Naive thymus-derived CD4-positive, alpha-beta T cell (primary cell): ENCODE measurements at regions of chr19 and their contacts with region 1.

Region 1: DNA sequence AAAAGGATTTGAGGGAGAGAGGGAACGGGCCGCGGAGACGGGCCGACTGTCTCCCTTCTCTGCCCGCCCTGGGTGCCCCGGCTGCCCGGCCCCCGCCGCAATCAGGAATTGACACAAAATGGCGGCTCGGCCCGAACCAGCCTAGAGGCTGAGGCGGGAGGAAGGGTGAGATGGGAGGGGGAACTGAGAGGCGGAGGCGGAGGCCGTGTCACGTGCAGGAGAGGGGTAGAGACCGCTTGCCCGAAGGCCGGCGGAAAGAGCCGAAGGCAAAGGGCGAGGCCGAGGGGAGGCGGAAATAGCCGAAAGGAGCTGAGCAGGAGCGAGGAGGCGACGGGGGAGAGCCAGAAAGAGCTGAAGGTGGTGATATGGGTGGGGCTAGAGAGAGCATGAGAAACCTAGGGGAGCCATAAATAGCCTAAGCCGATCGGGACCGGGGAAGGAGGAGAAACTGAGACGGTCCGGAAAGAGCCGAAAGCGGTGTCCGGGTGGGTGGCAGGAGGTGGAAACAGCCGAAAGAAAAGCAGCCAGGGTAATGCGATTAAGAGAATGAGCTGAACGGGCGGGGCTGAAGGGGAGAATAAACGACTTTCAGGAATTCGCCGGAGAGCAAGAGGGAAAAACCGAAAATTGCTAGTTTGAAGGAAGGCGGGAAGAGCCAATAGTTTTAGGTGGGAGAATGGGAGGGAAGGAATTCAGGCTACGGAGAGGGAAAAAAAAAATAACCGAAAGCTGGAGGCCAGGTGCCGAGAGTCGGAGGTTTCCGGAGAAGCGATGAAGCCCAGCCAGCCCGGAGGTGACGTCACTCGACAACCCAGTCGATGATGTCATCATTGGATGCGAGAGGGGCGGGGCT is at the start of gene ZC3H4:
- DNase-seq: peak; percentile 96 to 100 (median 100)
- ATAC-seq: peak; percentile 90
- H3K4me3 ChIP-seq: peak within 1 kb of the TSS; percentile 84
- H3K4me3 Mint-ChIP-seq: peak within 1 kb of the TSS; percentile 93 to 100 (median 98)
- H3K27ac ChIP-seq: peak within 1 kb of the TSS; percentile 99
- H3K27ac Mint-ChIP-seq: peak within 1 kb of the TSS; percentile 99 to 100 (median 100)
- H3K4me1 ChIP-seq: peaks cover 17 to 25% of the 10 kb centered on the region in 2 donors
- H3K4me1 Mint-ChIP-seq: peaks cover 22 to 38% (median 35%) of the 10 kb centered on the region in 7 donors
- H3K27me3 ChIP-seq: no peaks in the 10 kb centered on the region
- H3K27me3 Mint-ChIP-seq: peaks cover 0 to 2% (median 0%) of the 10 kb centered on the region in 5 donors
- total RNA-seq, gene ZC3H4: 53.6 to 123 (median 73.0) TPM

Region 2: DNA sequence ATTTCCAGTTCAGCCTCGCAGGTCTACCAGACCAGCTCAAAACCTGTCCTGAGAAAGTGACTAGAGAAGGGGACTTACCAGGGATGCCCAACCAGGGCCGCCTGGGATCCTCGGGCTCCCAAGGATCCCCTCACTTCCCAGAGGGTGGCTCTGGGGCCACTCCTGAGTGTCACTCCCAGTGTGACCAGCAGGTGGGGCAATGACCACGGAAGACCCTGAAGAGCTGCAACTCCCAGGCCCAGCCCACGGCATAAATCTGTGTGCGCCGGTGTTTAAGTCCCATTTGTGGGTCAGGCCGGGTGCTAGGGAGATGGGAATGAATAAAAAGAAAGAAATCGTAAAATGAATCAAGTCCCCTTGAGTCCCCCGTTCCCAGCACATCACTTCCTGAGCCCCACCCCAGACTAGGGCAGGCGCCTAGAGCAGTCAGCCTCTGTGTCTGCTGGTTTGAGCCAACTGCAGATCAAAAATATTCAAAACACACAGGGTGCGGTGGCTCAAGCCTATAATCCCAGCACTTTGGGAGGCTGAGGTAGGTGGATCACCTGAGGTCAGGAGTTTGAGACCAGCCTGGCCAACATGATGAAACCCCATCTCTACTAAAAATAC is 499.0 kb before region 1 on chr19:
- CTCF ChIA-PET with region 1: no interaction called
- POLR2A ChIA-PET with region 1: no interaction called
- intact Hi-C with region 1: loop called in 1 of 2 experiments (anchors 5 kb)
- DNase-seq: peak in 8 of 9 donors; percentile 70 to 83 (median 77)
- ATAC-seq: peak; percentile 79
- H3K4me3 ChIP-seq: no peak overlapping the region
- H3K4me3 Mint-ChIP-seq: peak overlapping the region; percentile 40 to 77 (median 71)
- H3K27ac ChIP-seq: peak overlapping the region; percentile 65
- H3K27ac Mint-ChIP-seq: peak overlapping the region; percentile 79 to 93 (median 89)
- H3K4me1 ChIP-seq: peaks cover 24 to 84% of the 10 kb centered on the region in 2 donors
- H3K4me1 Mint-ChIP-seq: peaks cover 55 to 85% (median 77%) of the 10 kb centered on the region in 7 donors
- H3K27me3 ChIP-seq: no peaks in the 10 kb centered on the region
- H3K27me3 Mint-ChIP-seq: no peaks in the 10 kb centered on the region

Region 3: GRCh38 chr19:46860125-46860845 is 252.9 kb before region 1 on chr19:
- CTCF ChIA-PET with region 1: no interaction called
- POLR2A ChIA-PET with region 1: interaction called, 4 read pairs
- intact Hi-C with region 1: loop called (anchors 1 to 2 kb)
- DNase-seq: peak; percentile 84 to 95 (median 94)
- ATAC-seq: peak; percentile 91
- H3K4me3 ChIP-seq: peak overlapping the region; percentile 92
- H3K4me3 Mint-ChIP-seq: peak overlapping the region in 9 of 10 donors; percentile 70 to 97 (median 92)
- H3K27ac ChIP-seq: peak overlapping the region; percentile 94
- H3K27ac Mint-ChIP-seq: peak overlapping the region; percentile 68 to 98 (median 92)
- H3K4me1 ChIP-seq: peaks cover 24 to 30% of the 10 kb centered on the region in 2 donors
- H3K4me1 Mint-ChIP-seq: peaks cover 13 to 25% (median 19%) of the 10 kb centered on the region in 7 donors
- H3K27me3 ChIP-seq: no peaks in the 10 kb centered on the region
- H3K27me3 Mint-ChIP-seq: no peaks in the 10 kb centered on the region

Region 4: GRCh38 chr19:46924874-46925547 is 188.2 kb before region 1 on chr19:
- CTCF ChIA-PET with region 1: no interaction called
- POLR2A ChIA-PET with region 1: no interaction called
- intact Hi-C with region 1: no loop called
- DNase-seq: peak in 1 of 9 donors; percentile 1
- ATAC-seq: peak; percentile 61
- H3K4me3 ChIP-seq: no peak overlapping the region
- H3K4me3 Mint-ChIP-seq: no peak overlapping the region
- H3K27ac ChIP-seq: no peak overlapping the region
- H3K27ac Mint-ChIP-seq: peak overlapping the region in 4 of 9 donors; percentile 1 to 82 (median 14)
- H3K4me1 ChIP-seq: peaks cover 12 to 43% of the 10 kb centered on the region in 2 donors
- H3K4me1 Mint-ChIP-seq: peaks cover 23 to 51% (median 46%) of the 10 kb centered on the region in 7 donors
- H3K27me3 ChIP-seq: no peaks in the 10 kb centered on the region
- H3K27me3 Mint-ChIP-seq: no peaks in the 10 kb centered on the region

Region 5: GRCh38 chr19:47081111-47081510 is 32.1 kb before region 1 on chr19:
- CTCF ChIA-PET with region 1: interaction called, 32 read pairs
- POLR2A ChIA-PET with region 1: interaction called, 51 read pairs
- intact Hi-C with region 1: loop called (anchors 1 kb)
- DNase-seq: no peak
- ATAC-seq: no peak
- H3K4me3 ChIP-seq: no peak overlapping the region
- H3K4me3 Mint-ChIP-seq: no peak overlapping the region
- H3K27ac ChIP-seq: no peak overlapping the region
- H3K27ac Mint-ChIP-seq: peak overlapping the region in 3 of 9 donors; percentile 8 to 67 (median 47)
- H3K4me1 ChIP-seq: no peaks in the 10 kb centered on the region
- H3K4me1 Mint-ChIP-seq: peaks cover 0 to 18% (median 0%) of the 10 kb centered on the region in 7 donors
- H3K27me3 ChIP-seq: no peaks in the 10 kb centered on the region
- H3K27me3 Mint-ChIP-seq: no peaks in the 10 kb centered on the region

Region 6: DNA sequence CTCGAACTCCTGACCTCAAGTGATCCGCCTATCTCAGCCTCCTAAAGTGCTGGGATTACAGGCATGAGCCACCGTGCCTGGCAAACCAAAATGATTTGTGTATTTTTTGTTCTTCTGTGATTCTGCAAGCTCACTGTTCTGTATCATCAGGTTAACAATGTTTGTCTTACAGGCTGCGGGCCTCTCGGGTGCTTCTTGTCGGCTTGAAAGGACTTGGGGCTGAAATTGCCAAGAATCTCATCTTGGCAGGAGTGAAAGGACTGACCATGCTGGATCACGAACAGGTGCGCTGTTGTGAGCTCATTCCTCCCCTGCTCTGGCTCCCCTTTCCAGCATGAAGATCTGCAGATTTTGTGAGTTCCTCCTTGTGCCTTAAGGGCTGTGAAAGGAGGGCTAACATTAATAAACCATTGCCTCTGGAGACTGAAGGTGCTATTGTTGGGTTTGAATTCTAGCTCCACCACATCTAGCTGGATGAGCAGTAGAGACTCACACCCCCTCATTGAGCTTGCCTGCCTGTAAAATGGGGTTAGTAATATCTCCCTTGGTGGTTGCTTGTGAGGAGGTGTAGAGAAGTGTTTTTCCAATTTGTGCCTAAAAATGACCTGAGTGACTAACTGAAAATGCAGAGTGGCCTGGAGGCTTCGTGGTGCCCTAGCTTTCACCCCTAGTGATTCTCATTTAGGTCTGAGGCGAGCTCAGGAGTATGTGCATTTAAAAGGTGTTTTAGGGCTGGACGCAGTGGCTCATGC is 30.3 kb after region 1 on chr19:
- CTCF ChIA-PET with region 1: interaction called, 3 read pairs
- POLR2A ChIA-PET with region 1: interaction called, 16 read pairs
- intact Hi-C with region 1: no loop called
- DNase-seq: no peak
- ATAC-seq: no peak
- H3K4me3 ChIP-seq: no peak overlapping the region
- H3K4me3 Mint-ChIP-seq: peak overlapping the region in 3 of 10 donors; percentile 9 to 45 (median 32)
- H3K27ac ChIP-seq: no peak overlapping the region
- H3K27ac Mint-ChIP-seq: peak overlapping the region in 4 of 9 donors; percentile 11 to 73 (median 42)
- H3K4me1 ChIP-seq: peaks cover 21 to 38% of the 10 kb centered on the region in 2 donors
- H3K4me1 Mint-ChIP-seq: peaks cover 29 to 75% (median 57%) of the 10 kb centered on the region in 7 donors
- H3K27me3 ChIP-seq: no peaks in the 10 kb centered on the region
- H3K27me3 Mint-ChIP-seq: no peaks in the 10 kb centered on the region

Region 7: GRCh38 chr19:47243776-47244547 is 130.7 kb after region 1 on chr19:
- CTCF ChIA-PET with region 1: interaction called, 8 read pairs
- POLR2A ChIA-PET with region 1: interaction called, 5 read pairs
- intact Hi-C with region 1: loop called in 1 of 2 experiments (anchors 1 kb)
- DNase-seq: peak; percentile 80 to 94 (median 86)
- ATAC-seq: peak; percentile 69
- H3K4me3 ChIP-seq: peak overlapping the region; percentile 42
- H3K4me3 Mint-ChIP-seq: peak overlapping the region in 7 of 10 donors; percentile 68 to 86 (median 85)
- H3K27ac ChIP-seq: peak overlapping the region; percentile 28
- H3K27ac Mint-ChIP-seq: peak overlapping the region in 6 of 9 donors; percentile 61 to 95 (median 90)
- H3K4me1 ChIP-seq: peaks cover 35 to 37% of the 10 kb centered on the region in 2 donors
- H3K4me1 Mint-ChIP-seq: peaks cover 9 to 33% (median 25%) of the 10 kb centered on the region in 7 donors
- H3K27me3 ChIP-seq: no peaks in the 10 kb centered on the region
- H3K27me3 Mint-ChIP-seq: peaks cover 0 to 6% (median 0%) of the 10 kb centered on the region in 5 donors

Region 8: GRCh38 chr19:47514869-47515588 is 401.8 kb after region 1 on chr19 and contains the start of gene NAPA:
- CTCF ChIA-PET with region 1: no interaction called
- POLR2A ChIA-PET with region 1: no interaction called
- intact Hi-C with region 1: loop called in 1 of 2 experiments (anchors 10 kb)
- DNase-seq: peak; percentile 99 to 100 (median 100)
- ATAC-seq: peak; percentile 96
- H3K4me3 ChIP-seq: peak within 1 kb of the TSS; percentile 97
- H3K4me3 Mint-ChIP-seq: peak within 1 kb of the TSS; percentile 81 to 100 (median 98)
- H3K27ac ChIP-seq: peak within 1 kb of the TSS; percentile 100
- H3K27ac Mint-ChIP-seq: peak within 1 kb of the TSS; percentile 81 to 99 (median 98)
- H3K4me1 ChIP-seq: peaks cover 50 to 64% of the 10 kb centered on the region in 2 donors
- H3K4me1 Mint-ChIP-seq: peaks cover 64 to 97% (median 92%) of the 10 kb centered on the region in 7 donors
- H3K27me3 ChIP-seq: no peaks in the 10 kb centered on the region
- H3K27me3 Mint-ChIP-seq: peaks cover 0 to 6% (median 0%) of the 10 kb centered on the region in 5 donors
- total RNA-seq, gene NAPA: 86.2 to 136 (median 107) TPM